K562 (cell line): ENCODE measurements at regions of chr5 and their contacts with region 1.

Region 1: GRCh38 chr5:175729829-175730277 is 72.0 kb downstream of the HRH2 start:
- DNase-seq: peak; percentile 88 to 93 (median 92)
- ATAC-seq: peak; percentile 99
- H3K4me3 ChIP-seq: no peak overlapping the region
- H3K27ac ChIP-seq: no peak overlapping the region
- H3K4me1 ChIP-seq: peaks cover 0 to 7% of the 10 kb centered on the region in 2 experiments; a peak in 2 of 5 replicates
- H3K27me3 ChIP-seq: peaks cover 0 to 36% of the 10 kb centered on the region in 2 experiments; a peak in 2 of 5 replicates
- CTCF ChIP-seq: peak; percentile 98 to 99 (median 98)
- EP300 ChIP-seq: no peak
- POLR2A ChIP-seq: no peak
- RAD21 ChIP-seq: peak; percentile 97 to 98

Region 2: GRCh38 chr5:175681045-175681967 is 48.5 kb before region 1 on chr5:
- CTCF ChIA-PET with region 1: no interaction called
- POLR2A ChIA-PET with region 1: no interaction called
- in situ Hi-C with region 1: no loop called
- intact Hi-C with region 1: no loop called
- DNase-seq: no peak
- ATAC-seq: no peak
- H3K4me3 ChIP-seq: no peak overlapping the region
- H3K27ac ChIP-seq: no peak overlapping the region
- H3K4me1 ChIP-seq: no peaks in the 10 kb centered on the region
- H3K27me3 ChIP-seq: peaks cover 38 to 94% of the 10 kb centered on the region in 2 experiments
- CTCF ChIP-seq: no peak
- EP300 ChIP-seq: no peak
- POLR2A ChIP-seq: no peak
- RAD21 ChIP-seq: no peak

Region 3: DNA sequence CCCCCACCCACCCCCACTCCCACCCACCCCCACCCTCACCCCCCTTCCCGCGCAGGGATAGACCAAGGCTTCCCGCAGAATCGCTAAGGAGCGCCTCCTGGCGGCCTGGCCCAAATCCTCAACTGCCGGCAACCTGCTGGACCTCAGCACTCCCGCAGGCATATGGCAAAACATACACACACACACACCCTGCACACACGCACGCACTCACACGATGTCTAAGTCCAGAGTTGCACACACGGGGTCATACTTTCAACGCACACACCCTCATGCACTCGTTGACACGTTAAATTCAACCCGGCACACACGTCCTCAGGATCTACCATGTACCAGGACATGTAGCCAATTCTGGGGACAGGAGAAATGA is 143.2 kb after region 1 on chr5:
- CTCF ChIA-PET with region 1: no interaction called
- POLR2A ChIA-PET with region 1: no interaction called
- in situ Hi-C with region 1: no loop called
- intact Hi-C with region 1: loop called (anchors 5 kb)
- DNase-seq: peak; percentile 30 to 54 (median 44)
- ATAC-seq: peak; percentile 73
- H3K4me3 ChIP-seq: no peak overlapping the region
- H3K27ac ChIP-seq: no peak overlapping the region
- H3K4me1 ChIP-seq: peaks cover 0 to 14% of the 10 kb centered on the region in 2 experiments; a peak in 2 of 5 replicates
- H3K27me3 ChIP-seq: peaks cover 0 to 2% of the 10 kb centered on the region in 2 experiments; a peak in 1 of 5 replicates
- CTCF ChIP-seq: peak; percentile 38 to 59 (median 46)
- EP300 ChIP-seq: no peak
- POLR2A ChIP-seq: no peak
- RAD21 ChIP-seq: 0 out of 4 replicates have a peak, but pooled peaks of 1 of the 2 experiments have one; percentile 14